ENCODE measurements at regions of chr5 and their contacts with region 1.

Region 1: GRCh38 chr5:142655339-142656267 is 30.3 kb downstream of the FGF1 start:
- DNase-seq: peak; percentile 83 to 86
- H3K4me3 ChIP-seq: no peak overlapping the region
- H3K27ac ChIP-seq: no peak overlapping the region
- H3K4me1 ChIP-seq: peaks cover 0 to 4% of the 10 kb centered on the region in 2 donors
- H3K27me3 ChIP-seq: no peaks in the 10 kb centered on the region
- CTCF ChIP-seq: peak; percentile 87 to 98 (median 95)
- POLR2A ChIP-seq: no peak

Region 2: DNA sequence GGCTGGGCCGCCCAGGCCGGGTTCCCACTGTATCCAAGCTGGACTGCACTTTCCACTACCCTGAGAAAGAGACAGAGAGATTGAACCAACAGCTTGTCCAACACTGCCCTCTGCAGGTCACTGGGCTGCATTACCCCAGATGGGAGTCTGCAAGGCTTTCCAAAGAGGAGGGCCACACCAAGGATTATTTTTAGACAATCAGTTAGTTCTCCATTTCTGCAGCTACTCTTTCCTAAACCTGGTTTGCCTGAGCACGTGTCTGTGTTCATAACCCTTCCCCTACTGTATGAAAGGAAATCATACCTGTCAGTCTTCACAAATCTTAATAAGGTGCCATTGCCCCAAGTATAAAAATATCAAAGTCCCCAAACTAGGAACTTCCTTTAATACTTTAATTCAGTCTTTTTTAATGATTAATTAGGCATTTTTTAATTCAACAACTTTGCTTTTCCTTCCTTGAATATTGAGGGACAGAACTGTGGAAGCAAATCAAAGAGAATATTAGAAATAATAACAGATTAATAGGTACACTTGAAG is 43.6 kb after region 1 on chr5:
- intact Hi-C with region 1: loop called (anchors 5 kb)
- DNase-seq: peak; percentile 87 to 90
- H3K4me3 ChIP-seq: no peak overlapping the region
- H3K27ac ChIP-seq: no peak overlapping the region
- H3K4me1 ChIP-seq: peaks cover 14 to 24% of the 10 kb centered on the region in 2 donors
- H3K27me3 ChIP-seq: no peaks in the 10 kb centered on the region
- CTCF ChIP-seq: peak; percentile 83 to 97 (median 96)
- POLR2A ChIP-seq: no peak

Region 3: DNA sequence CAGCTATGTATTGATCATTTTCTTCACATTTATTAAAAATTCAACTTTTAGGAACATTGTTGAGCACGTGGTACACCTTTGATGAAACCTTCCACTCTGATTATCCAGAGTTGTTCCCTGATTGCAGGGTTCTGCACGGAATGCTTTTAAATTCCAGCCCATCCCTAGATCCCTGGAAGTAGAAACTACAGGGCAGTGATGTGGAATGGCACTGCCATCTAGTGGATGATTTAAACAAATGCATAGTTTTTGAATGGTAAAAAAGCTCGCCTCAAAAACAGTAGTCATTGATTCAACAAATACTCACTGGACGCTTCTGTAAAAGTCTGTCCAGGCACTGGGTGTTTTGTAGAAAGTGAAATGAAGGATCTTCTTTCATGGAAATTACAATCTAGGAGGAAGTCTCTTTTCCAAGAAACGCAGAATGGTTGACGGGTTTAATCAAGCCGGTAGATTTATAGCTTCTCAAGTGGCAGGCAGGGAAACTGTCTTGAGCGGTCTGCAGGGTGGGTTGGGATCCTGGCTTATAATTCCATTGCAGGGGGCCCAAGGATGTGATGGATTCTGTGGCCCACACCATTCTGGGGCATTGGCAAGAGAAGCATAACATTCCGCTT is 233.0 kb after region 1 on chr5:
- intact Hi-C with region 1: loop called (anchors 5 kb)
- DNase-seq: peak; percentile 30 to 43
- H3K4me3 ChIP-seq: no peak overlapping the region
- H3K27ac ChIP-seq: no peak overlapping the region
- H3K4me1 ChIP-seq: peaks cover 0 to 5% of the 10 kb centered on the region in 2 donors
- H3K27me3 ChIP-seq: no peaks in the 10 kb centered on the region
- CTCF ChIP-seq: peak; percentile 28 to 78 (median 70)
- POLR2A ChIP-seq: no peak

Region 4: GRCh38 chr5:142915813-142916424 is 260.3 kb after region 1 on chr5:
- intact Hi-C with region 1: no loop called
- DNase-seq: peak; percentile 53 to 62
- H3K4me3 ChIP-seq: no peak overlapping the region
- H3K27ac ChIP-seq: no peak overlapping the region
- H3K4me1 ChIP-seq: peaks cover 4 to 10% of the 10 kb centered on the region in 2 donors
- H3K27me3 ChIP-seq: no peaks in the 10 kb centered on the region
- CTCF ChIP-seq: peak in 4 of 6 experiments; percentile 19 to 62 (median 54)
- POLR2A ChIP-seq: no peak

Region 5: DNA sequence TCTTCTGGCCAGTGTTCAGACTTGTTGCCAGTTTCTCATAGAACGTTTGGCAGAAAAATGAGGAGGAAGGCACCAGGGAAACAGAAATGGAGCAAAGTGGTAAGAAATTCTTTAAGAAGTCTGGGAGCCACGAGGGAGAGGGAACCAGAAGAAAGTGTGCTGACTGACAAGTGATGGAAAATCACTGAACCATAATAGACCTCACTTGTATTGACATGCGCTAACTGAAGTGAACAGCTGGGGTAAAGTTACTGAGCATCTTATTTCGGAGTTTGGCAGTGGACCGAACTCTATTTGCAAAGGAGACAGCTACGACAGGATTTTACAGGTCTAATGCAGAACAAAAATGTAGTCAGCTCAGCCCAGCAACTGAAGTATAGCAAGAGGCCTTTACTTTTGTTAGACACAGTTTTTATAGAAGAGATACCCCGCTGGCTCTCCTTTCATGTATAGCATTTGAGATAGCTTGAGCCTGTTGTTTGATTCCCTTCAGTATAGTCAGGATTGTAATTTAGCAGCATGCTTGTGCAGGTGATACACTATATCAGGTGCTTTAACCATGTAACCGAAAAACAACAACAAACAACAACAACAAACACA is 1209.9 kb after region 1 on chr5:
- intact Hi-C with region 1: no loop called
- DNase-seq: peak; percentile 23 to 25
- H3K4me3 ChIP-seq: no peak overlapping the region
- H3K27ac ChIP-seq: peak overlapping the region in 2 of 3 donors; percentile 24 to 47
- H3K4me1 ChIP-seq: peaks cover 12% of the 10 kb centered on the region in 2 donors
- H3K27me3 ChIP-seq: no peaks in the 10 kb centered on the region
- CTCF ChIP-seq: no peak
- POLR2A ChIP-seq: no peak